ENCODE measurements at regions of chr3 and their contacts with region 1.

Region 1: GRCh38 chr3:9731206-9732079 is at the start of gene BRPF1:
- DNase-seq: peak; percentile 96
- H3K4me3 Mint-ChIP-seq: peak within 1 kb of the TSS; percentile 96
- H3K27ac Mint-ChIP-seq: peak within 1 kb of the TSS; percentile 94
- H3K4me1 Mint-ChIP-seq: peaks cover 58% of the 10 kb centered on the region
- H3K27me3 Mint-ChIP-seq: no peaks in the 10 kb centered on the region
- total RNA-seq, gene BRPF1: 44.6 and 45.9 TPM in 2 replicates

Region 2: DNA sequence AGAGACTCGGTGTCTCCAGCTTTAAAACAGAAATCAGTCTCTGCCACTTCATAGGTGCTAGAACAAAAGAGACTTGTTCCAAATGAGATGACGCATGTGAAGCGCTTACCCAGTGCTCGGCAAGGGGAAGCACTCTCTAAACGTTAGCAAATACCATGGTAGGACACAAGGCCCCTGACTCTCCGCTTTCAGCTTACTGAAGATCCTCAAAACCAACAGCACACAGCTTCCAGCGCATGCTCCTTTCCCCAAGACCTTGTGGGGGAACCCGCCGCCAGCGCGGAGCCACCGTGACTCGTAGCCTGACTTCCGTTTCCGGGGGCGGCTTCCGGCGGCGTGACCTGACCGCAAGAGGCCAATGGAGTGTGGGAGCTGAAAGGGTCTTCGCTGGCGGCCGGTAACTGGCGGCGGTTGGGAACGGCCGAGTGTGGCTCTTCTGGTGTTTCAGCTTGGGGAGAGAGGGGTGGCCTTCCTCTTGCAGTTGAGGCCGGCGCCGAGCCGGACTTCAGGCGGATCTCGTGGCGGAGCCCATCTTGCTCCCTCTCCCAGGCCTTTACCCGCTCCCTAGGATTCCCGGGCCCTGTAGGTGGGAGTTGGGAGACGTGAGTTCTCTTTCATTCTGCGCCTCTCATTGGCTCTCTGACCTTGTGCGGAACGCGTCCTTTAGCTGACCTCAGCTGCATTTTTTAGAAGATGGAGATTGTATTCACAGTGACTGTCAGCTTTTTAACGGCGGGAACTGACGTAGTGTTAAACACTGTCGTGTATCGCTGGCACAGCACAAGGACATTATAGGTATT is 368.5 kb before region 1 on chr3 and contains the start of gene THUMPD3:
- intact Hi-C with region 1: loop called (anchors 1 kb)
- DNase-seq: peak; percentile 90
- H3K4me3 Mint-ChIP-seq: peak within 1 kb of the TSS; percentile 96
- H3K27ac Mint-ChIP-seq: peak within 1 kb of the TSS; percentile 98
- H3K4me1 Mint-ChIP-seq: peaks cover 6% of the 10 kb centered on the region
- H3K27me3 Mint-ChIP-seq: peaks cover 2% of the 10 kb centered on the region
- total RNA-seq, gene THUMPD3: 61.4 and 62.4 TPM in 2 replicates

Region 3: GRCh38 chr3:9649791-9650521 is 81.5 kb before region 1 on chr3:
- intact Hi-C with region 1: loop called (anchors 1 kb)
- DNase-seq: no peak
- H3K4me3 Mint-ChIP-seq: peak overlapping the region; percentile 93
- H3K27ac Mint-ChIP-seq: peak overlapping the region; percentile 82
- H3K4me1 Mint-ChIP-seq: peaks cover 13% of the 10 kb centered on the region
- H3K27me3 Mint-ChIP-seq: no peaks in the 10 kb centered on the region

Region 4: DNA sequence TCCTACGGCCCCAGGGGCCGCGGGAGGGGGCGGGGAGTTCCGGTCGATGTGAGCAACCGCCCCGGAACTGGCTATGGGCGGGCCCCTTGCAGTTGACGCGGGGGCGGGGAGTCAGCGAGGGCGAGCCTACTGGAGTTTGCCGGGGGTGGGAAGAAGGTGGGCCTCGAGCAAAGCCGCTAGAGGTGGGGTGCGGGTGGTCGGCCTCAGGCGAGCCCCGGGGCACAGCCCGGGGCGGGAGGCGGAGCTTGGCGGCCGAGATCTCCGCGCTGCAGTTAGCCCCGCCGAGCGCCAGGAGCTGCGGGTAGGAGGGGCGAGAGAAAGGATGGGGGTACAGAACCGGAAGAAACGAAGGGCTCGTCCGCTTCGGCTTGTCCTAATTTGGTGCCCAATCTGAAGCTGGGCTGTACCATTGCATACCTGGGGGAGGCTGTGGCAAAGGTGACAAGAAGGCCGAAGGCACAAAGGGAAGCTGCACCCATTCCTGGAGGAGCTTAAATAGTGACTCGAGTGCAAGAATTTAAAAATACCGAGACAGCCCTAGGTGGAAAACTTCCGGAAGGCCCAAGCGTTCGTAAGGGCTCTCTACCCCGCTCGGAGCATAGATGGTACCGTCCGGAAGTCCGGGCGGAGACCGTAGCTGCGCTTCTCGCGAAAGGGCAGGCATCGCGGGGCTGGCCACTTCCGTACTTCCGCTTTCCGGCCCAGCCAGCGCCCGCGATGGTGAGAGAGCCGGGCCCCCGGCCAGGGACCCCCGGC is 61.1 kb after region 1 on chr3 and contains the starts of genes ARPC4 and TADA3:
- intact Hi-C with region 1: loop called (anchors 1 kb)
- DNase-seq: peak; percentile 89
- H3K4me3 Mint-ChIP-seq: peak within 1 kb of the TSS; percentile 99
- H3K27ac Mint-ChIP-seq: peak within 1 kb of the TSS; percentile 100
- H3K4me1 Mint-ChIP-seq: peaks cover 57% of the 10 kb centered on the region
- H3K27me3 Mint-ChIP-seq: no peaks in the 10 kb centered on the region
- total RNA-seq, gene ARPC4: 268 and 273 TPM in 2 replicates
- total RNA-seq, gene TADA3: 63.4 and 63.6 TPM in 2 replicates

Region 5: DNA sequence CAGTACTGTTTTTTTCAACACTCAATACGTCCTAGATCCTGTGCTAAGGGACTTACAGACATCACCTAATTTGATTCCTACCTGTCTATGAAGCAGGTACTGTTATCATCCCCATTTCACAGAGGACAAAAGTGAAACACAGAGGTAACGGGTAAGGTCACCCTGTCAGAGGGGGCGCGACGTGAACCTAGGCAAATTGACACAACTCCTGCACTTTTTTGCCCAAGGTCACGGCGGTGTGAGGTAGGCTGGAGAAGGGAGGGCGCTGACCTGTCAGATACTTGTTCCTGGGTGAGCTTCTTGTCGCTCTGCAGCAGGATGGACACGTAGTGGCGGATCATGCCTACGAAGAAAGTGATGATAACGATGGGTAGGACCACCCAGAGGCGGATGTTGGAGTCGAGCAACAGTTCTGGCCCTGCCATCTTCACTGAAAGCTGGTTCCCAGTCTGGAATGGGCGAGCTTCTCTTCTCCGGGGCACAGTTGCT is 254.8 kb after region 1 on chr3:
- intact Hi-C with region 1: loop called (anchors 1 kb)
- DNase-seq: no peak
- H3K4me3 Mint-ChIP-seq: peak overlapping the region; percentile 97
- H3K27ac Mint-ChIP-seq: peak overlapping the region; percentile 98
- H3K4me1 Mint-ChIP-seq: peaks cover 27% of the 10 kb centered on the region
- H3K27me3 Mint-ChIP-seq: no peaks in the 10 kb centered on the region

Region 6: DNA sequence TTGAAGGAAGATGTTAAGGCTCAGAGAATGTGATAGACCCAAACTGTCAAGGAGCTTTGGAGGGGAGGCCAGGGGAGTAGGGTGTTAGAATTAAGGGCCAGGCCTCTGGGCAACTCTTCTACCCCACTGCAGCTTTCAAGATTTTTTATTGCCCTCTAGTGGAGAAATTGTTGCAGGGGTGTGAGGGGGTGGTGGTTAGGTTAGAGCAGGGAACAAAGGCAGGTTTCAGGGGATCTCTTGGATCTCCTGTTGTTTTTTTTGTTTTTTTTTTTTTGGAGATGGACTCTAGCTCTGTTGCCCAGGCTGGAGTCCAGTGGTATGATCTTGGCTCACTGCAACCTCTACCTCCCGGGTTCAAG is 590.9 kb after region 1 on chr3:
- intact Hi-C with region 1: loop called (anchors 1 kb)
- DNase-seq: peak; percentile 24
- H3K4me3 Mint-ChIP-seq: peak overlapping the region; percentile 30
- H3K27ac Mint-ChIP-seq: no peak overlapping the region
- H3K4me1 Mint-ChIP-seq: peaks cover 30% of the 10 kb centered on the region
- H3K27me3 Mint-ChIP-seq: peaks cover 13% of the 10 kb centered on the region